AG04449 (cell line): ENCODE measurements at regions of chr12 and their contacts with region 1.

Region 1: GRCh38 chr12:108664338-108665258 is 30.9 kb upstream of the SELPLG start:
- DNase-seq: peak; percentile 81
- H3K4me3 ChIP-seq: no peak overlapping the region
- CTCF ChIP-seq: peak; percentile 79

Region 2: DNA sequence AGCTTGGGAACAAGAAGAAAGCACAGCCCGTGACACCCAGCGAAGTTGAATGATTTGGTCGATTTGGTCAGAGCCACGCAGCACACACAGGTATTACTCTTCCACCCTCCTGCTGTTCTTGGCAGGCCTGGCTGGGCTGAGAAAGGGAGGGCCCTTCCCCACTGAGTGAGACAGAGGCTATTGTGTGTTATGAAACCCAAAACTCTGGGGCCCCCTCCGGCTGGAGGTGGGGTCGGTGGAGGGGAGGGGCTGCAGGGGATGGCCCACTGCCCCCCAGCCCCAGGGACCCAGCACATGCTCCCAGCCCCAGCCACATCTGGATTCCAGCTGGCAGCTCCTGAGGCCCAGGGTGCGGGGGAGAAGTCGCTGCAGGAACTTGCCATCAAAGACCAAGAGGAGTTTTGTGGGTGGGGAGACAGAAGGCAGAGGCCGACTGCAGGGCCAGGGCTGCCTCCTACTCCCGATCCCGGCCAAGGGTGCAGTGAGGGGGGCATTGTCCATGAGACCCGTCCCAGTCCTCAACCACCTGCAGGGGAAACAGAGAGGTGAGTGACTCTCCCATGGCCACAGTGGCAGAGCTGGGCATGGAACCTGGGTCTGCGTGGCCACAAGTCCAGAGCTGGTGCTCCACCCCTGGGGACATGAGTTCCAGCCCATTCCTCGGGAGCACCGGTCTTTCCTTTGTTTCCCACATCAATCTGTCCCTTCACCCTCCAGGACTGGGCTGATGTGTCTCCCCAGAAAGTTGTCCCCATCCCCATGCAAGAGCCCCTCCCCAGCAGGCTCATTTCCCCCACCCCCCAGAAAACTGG is 75.4 kb before region 1 on chr12:
- CTCF ChIA-PET with region 1: no interaction called
- POLR2A ChIA-PET with region 1: no interaction called
- DNase-seq: no peak
- H3K4me3 ChIP-seq: no peak overlapping the region
- CTCF ChIP-seq: no peak

Region 3: DNA sequence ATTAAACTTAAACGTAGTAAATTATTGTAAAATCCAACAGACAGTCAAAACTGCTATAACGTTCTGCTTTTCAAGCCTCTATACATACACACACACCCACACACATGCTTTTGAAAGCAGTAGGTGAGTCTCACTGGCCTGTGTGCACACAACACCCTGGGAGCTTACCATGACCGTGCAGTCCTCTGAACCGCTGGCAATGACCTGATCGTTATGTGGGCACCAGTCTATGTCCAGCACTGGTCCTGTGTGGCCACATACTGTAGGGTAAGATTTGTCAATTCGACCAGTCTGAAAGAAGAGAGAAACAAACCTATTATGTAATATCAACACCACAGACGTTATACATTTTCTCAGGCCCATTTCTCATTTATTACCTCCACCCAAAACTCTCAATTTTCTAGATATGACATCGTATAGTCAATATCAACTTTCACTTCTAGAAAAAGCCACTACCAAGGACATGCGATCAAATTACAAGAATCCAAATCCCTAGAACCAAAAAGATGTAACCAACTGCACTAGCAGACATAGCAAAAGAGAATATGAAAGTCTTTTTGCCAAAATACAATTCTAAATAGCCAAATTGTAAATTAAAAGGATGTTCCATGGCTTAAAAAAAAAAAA is 13.6 kb after region 1 on chr12:
- CTCF ChIA-PET with region 1: interaction called, 57 read pairs
- POLR2A ChIA-PET with region 1: interaction called, 3 read pairs
- DNase-seq: no peak
- H3K4me3 ChIP-seq: no peak overlapping the region
- CTCF ChIP-seq: no peak

Region 4: GRCh38 chr12:108691175-108691997 is 26.8 kb after region 1 on chr12:
- CTCF ChIA-PET with region 1: interaction called, 42 read pairs
- POLR2A ChIA-PET with region 1: no interaction called
- DNase-seq: peak; percentile 98
- H3K4me3 ChIP-seq: peak overlapping the region; percentile 41
- CTCF ChIP-seq: peak; percentile 31

Region 5: GRCh38 chr12:108778053-108778452 is 113.5 kb after region 1 on chr12:
- CTCF ChIA-PET with region 1: interaction called, 15 read pairs
- POLR2A ChIA-PET with region 1: interaction called, 3 read pairs
- DNase-seq: no peak
- H3K4me3 ChIP-seq: no peak overlapping the region
- CTCF ChIP-seq: no peak

Region 6: GRCh38 chr12:108950991-108951739 is 286.6 kb after region 1 on chr12:
- CTCF ChIA-PET with region 1: interaction called, 18 read pairs
- POLR2A ChIA-PET with region 1: interaction called, 3 read pairs
- DNase-seq: no peak
- H3K4me3 ChIP-seq: no peak overlapping the region
- CTCF ChIP-seq: peak; percentile 72